ENCODE measurements at regions of chr15 and their contacts with region 1.

Region 1: GRCh38 chr15:78909791-78910228 is 35.0 kb downstream of the CTSH start:
- DNase-seq: no peak
- H3K4me3 ChIP-seq: no peak overlapping the region
- H3K27ac ChIP-seq: peak overlapping the region; percentile 42
- H3K27me3 ChIP-seq: no peaks in the 10 kb centered on the region
- CTCF ChIP-seq: peak; percentile 74

Region 2: DNA sequence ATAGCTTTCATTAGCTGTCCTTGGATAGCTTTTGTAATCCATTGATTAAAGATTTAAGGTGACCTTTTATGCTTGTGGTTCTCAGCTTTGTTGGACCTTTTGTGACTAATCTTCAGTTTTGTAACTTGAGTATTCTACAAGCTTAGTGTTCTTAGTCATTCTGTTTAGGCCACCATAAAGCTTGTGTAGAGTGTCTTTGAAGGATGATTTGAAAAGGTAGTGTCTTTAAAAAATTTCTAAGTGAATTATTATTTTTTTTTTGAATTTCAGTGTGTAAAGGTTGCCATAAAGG is 29.6 kb before region 1 on chr15:
- CTCF ChIA-PET with region 1: interaction called, 18 read pairs
- POLR2A ChIA-PET with region 1: interaction called, 5 read pairs
- DNase-seq: no peak
- H3K4me3 ChIP-seq: no peak overlapping the region
- H3K27ac ChIP-seq: no peak overlapping the region
- H3K27me3 ChIP-seq: no peaks in the 10 kb centered on the region
- CTCF ChIP-seq: no peak

Region 3: GRCh38 chr15:78979456-78980320 is 69.9 kb after region 1 on chr15:
- CTCF ChIA-PET with region 1: interaction called, 15 read pairs
- POLR2A ChIA-PET with region 1: no interaction called
- DNase-seq: peak; percentile 37
- H3K4me3 ChIP-seq: no peak overlapping the region
- H3K27ac ChIP-seq: no peak overlapping the region
- H3K27me3 ChIP-seq: no peaks in the 10 kb centered on the region
- CTCF ChIP-seq: peak; percentile 72

Region 4: GRCh38 chr15:79007066-79007465 is 97.3 kb after region 1 on chr15:
- CTCF ChIA-PET with region 1: interaction called, 14 read pairs
- POLR2A ChIA-PET with region 1: no interaction called
- DNase-seq: no peak
- H3K4me3 ChIP-seq: no peak overlapping the region
- H3K27ac ChIP-seq: no peak overlapping the region
- H3K27me3 ChIP-seq: peaks cover 2% of the 10 kb centered on the region
- CTCF ChIP-seq: peak; percentile 58